ENCODE measurements at regions of chr9 and their contacts with region 1.

Region 1: DNA sequence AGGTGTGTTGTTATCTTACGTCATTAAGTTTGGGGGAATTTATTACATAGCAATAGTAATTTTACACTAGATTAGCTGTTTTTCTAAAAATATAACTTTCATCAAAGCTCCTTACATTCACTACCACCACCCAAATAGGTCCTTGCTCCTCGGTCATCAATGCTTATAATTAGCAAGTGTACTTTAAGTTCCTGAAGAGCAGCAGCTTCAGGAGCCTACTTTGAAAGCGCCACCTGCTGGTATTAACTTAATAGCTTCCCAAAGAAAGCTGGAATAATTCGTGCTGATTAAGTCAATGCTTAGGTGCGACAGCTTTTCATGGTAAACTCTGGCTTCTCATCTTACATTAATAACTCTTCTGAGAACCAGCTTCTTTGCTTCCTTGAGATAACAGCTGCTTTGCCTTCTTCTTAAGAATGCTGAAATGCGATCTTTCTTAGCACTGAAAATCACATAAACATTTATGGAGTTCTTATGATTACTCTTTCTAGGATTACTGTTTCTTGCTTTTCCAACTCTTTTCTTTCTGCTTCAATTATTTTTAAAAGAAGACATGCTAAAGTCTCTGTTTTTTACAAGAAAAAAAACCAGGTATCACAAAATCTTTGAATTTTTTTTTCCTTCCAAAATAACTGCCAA is 10.0 kb upstream of the C5 start:
- DNase-seq: peak; percentile 47
- H3K4me3 ChIP-seq: no peak overlapping the region; a peak in 1 of 4 replicates
- H3K27ac ChIP-seq: no peak overlapping the region
- H3K4me1 ChIP-seq: no peaks in the 10 kb centered on the region; a peak in 1 of 4 replicates
- H3K27me3 ChIP-seq: no peaks in the 10 kb centered on the region
- CTCF ChIP-seq: peak; percentile 85
- EP300 ChIP-seq: no peak
- RAD21 ChIP-seq: peak; percentile 74

Region 2: GRCh38 chr9:120755827-120756434 is 304.2 kb before region 1 on chr9:
- CTCF ChIA-PET with region 1: interaction called, 47 read pairs
- POLR2A ChIA-PET with region 1: no interaction called
- DNase-seq: peak; percentile 86
- H3K4me3 ChIP-seq: peak overlapping the region in 1 of 2 experiments; percentile 26; a peak in 1 of 4 replicates
- H3K27ac ChIP-seq: no peak overlapping the region; a peak in 1 of 4 replicates
- H3K4me1 ChIP-seq: peaks cover 0 to 8% of the 10 kb centered on the region in 2 experiments; a peak in 1 of 4 replicates
- H3K27me3 ChIP-seq: no peaks in the 10 kb centered on the region
- CTCF ChIP-seq: peak; percentile 90
- EP300 ChIP-seq: no peak
- RAD21 ChIP-seq: peak; percentile 94

Region 3: DNA sequence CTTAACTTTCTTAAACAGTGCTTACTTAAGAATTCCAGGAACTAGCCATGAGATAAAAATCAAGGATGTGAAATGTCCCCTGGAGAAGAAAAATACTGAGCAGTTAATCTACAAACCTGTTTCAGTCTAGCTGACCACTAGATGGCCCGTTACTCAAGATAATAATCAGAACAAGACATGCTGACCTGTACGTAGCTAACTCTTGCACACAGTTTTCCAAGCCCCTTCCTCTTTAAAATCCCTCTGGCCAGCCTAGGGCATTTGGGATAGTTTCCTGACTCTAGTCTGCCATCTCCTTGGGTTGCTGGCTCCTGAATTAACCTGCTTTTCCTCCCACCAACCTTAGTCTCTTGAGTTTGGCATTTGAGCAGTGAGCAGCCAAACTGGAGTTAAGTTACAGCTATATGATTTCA is 74.3 kb before region 1 on chr9:
- CTCF ChIA-PET with region 1: interaction called, 42 read pairs
- POLR2A ChIA-PET with region 1: no interaction called
- DNase-seq: peak; percentile 59
- H3K4me3 ChIP-seq: no peak overlapping the region
- H3K27ac ChIP-seq: no peak overlapping the region
- H3K4me1 ChIP-seq: peaks cover 0 to 2% of the 10 kb centered on the region in 2 experiments; a peak in 1 of 4 replicates
- H3K27me3 ChIP-seq: no peaks in the 10 kb centered on the region
- CTCF ChIP-seq: peak; percentile 72
- EP300 ChIP-seq: no peak
- RAD21 ChIP-seq: peak; percentile 78

Region 4: GRCh38 chr9:121023064-121023463 is 37.1 kb before region 1 on chr9:
- CTCF ChIA-PET with region 1: interaction called, 23 read pairs
- POLR2A ChIA-PET with region 1: no interaction called
- DNase-seq: peak; percentile 23
- H3K4me3 ChIP-seq: no peak overlapping the region
- H3K27ac ChIP-seq: no peak overlapping the region
- H3K4me1 ChIP-seq: no peaks in the 10 kb centered on the region
- H3K27me3 ChIP-seq: no peaks in the 10 kb centered on the region
- CTCF ChIP-seq: peak; percentile 39
- EP300 ChIP-seq: no peak
- RAD21 ChIP-seq: peak; percentile 44

Region 5: GRCh38 chr9:121048618-121049017 is 11.5 kb before region 1 on chr9:
- CTCF ChIA-PET with region 1: interaction called, 20 read pairs
- POLR2A ChIA-PET with region 1: no interaction called
- DNase-seq: no peak
- H3K4me3 ChIP-seq: no peak overlapping the region
- H3K27ac ChIP-seq: peak overlapping the region in 1 of 2 experiments; percentile 53; a peak in 1 of 4 replicates
- H3K4me1 ChIP-seq: peaks cover 5 to 6% of the 10 kb centered on the region in 2 experiments; a peak in 3 of 4 replicates
- H3K27me3 ChIP-seq: no peaks in the 10 kb centered on the region
- CTCF ChIP-seq: no peak
- EP300 ChIP-seq: no peak
- RAD21 ChIP-seq: no peak

Region 6: GRCh38 chr9:121105531-121105930 is 45.4 kb after region 1 on chr9:
- CTCF ChIA-PET with region 1: no interaction called
- POLR2A ChIA-PET with region 1: no interaction called
- DNase-seq: no peak
- H3K4me3 ChIP-seq: no peak overlapping the region
- H3K27ac ChIP-seq: no peak overlapping the region
- H3K4me1 ChIP-seq: no peaks in the 10 kb centered on the region; a peak in 1 of 4 replicates
- H3K27me3 ChIP-seq: no peaks in the 10 kb centered on the region
- CTCF ChIP-seq: no peak
- EP300 ChIP-seq: no peak
- RAD21 ChIP-seq: no peak

Measured in SK-N-SH (cell line).